ENCODE measurements at regions of chr13 and their contacts with region 1.

Region 1: DNA sequence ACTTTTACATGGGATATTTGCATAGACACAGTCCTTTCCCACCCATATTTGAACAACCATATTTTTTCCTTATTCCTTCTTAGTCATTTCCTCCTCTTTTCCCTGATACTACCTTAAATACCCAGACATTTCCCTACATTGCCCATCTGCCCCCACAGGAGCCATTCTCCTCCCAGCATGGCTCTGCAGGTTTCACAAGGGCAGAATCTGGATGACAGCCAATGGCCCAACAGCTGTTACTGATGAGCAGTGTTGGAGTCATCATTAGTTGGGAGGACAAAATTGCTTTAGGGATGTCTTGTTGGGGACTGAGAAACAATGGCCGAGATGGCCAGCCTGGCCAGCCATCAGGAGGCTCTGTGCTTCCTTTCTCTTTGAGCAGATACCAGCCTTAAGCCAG is 209.5 kb downstream of the KLF5 start:
- DNase-seq: no peak
- H3K4me3 Mint-ChIP-seq: no peak overlapping the region
- H3K27ac Mint-ChIP-seq: no peak overlapping the region
- H3K4me1 Mint-ChIP-seq: peaks cover 15% of the 10 kb centered on the region
- H3K27me3 Mint-ChIP-seq: peaks cover 2% of the 10 kb centered on the region

Region 2: DNA sequence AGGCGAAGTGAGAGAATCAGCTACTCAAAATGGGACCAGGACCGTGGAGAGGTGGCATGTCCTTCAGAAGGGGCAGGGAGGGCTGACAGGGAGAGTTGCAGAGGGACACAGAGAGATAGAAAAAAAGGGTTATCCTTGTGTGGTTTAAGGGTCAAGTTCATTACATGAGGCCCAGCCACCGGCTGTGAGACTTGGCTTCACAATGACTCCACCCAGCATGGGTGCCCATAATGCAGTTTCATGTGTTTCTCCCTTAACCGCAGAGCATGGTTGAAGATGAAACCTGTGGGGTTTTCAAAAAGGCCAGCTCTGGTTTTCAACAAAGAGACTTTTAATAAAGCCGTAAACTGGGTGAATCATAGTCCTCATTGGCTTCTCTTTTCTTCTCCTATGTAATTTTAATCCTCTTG is 44.9 kb before region 1 on chr13:
- intact Hi-C with region 1: loop called (anchors 2 kb)
- DNase-seq: peak; percentile 22
- H3K4me3 Mint-ChIP-seq: no peak overlapping the region
- H3K27ac Mint-ChIP-seq: no peak overlapping the region
- H3K4me1 Mint-ChIP-seq: peaks cover 27% of the 10 kb centered on the region
- H3K27me3 Mint-ChIP-seq: peaks cover 36% of the 10 kb centered on the region

Region 3: GRCh38 chr13:73428137-73428536 is 159.8 kb after region 1 on chr13:
- intact Hi-C with region 1: no loop called
- DNase-seq: no peak
- H3K4me3 Mint-ChIP-seq: no peak overlapping the region
- H3K27ac Mint-ChIP-seq: no peak overlapping the region
- H3K4me1 Mint-ChIP-seq: no peaks in the 10 kb centered on the region
- H3K27me3 Mint-ChIP-seq: peaks cover 2% of the 10 kb centered on the region

Measured in activated T-helper 2 cell treated with anti-CD3 and anti-CD28 coated beads, Interferon-gamma antibody, Interleukin-2, Interleukin-4, amounts not matched to agents 10 μg/mL and 5 μg/mL and 100 μg/mL, durations not matched to agents 14 hours and 24 hours and 36 hours (primary cell).